PC-3 (cell line): ENCODE measurements at regions of chr4 and their contacts with region 1.

Region 1: DNA sequence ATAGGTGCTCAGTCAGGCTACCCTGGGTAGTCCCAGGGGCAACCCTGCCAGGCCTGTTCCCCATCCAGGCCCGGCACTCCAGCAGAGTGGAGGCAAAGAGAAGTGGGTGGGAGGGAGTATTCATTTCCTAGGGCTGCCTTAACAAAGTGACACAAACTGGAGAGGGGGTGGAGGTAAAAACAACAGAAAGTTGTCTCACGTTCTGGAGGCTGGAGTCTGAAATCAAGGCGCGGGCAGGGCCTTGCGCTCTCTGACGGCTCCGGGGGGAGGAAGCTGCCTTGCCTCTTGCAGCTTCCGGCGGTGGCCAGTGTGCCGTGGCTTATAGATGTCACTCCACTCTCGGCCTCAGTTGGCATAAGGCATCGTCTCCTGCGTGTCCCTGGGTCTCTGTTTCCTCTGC is 90.8 kb downstream of the DCTD start:
- DNase-seq: no peak
- ATAC-seq: no peak
- H3K4me3 ChIP-seq: no peak overlapping the region
- H3K27ac ChIP-seq: no peak overlapping the region
- H3K4me1 ChIP-seq: no peaks in the 10 kb centered on the region; the same call in 1 of the 2 replicates
- H3K27me3 ChIP-seq: no peaks in the 10 kb centered on the region
- CTCF ChIP-seq: no peak

Region 2: GRCh38 chr4:182880387-182881356 is 54.3 kb after region 1 on chr4:
- CTCF ChIA-PET with region 1: no interaction called
- POLR2A ChIA-PET with region 1: no interaction called
- intact Hi-C with region 1: loop called (anchors 5 kb)
- DNase-seq: peak; percentile 36
- ATAC-seq: peak; percentile 85
- H3K4me3 ChIP-seq: no peak overlapping the region
- H3K27ac ChIP-seq: no peak overlapping the region
- H3K4me1 ChIP-seq: no peaks in the 10 kb centered on the region
- H3K27me3 ChIP-seq: no peaks in the 10 kb centered on the region
- CTCF ChIP-seq: no peak

Region 3: GRCh38 chr4:182897601-182898478 is 71.4 kb after region 1 on chr4:
- CTCF ChIA-PET with region 1: no interaction called
- POLR2A ChIA-PET with region 1: no interaction called
- intact Hi-C with region 1: no loop called
- DNase-seq: no peak
- ATAC-seq: no peak
- H3K4me3 ChIP-seq: no peak overlapping the region
- H3K27ac ChIP-seq: no peak overlapping the region
- H3K4me1 ChIP-seq: no peaks in the 10 kb centered on the region
- H3K27me3 ChIP-seq: no peaks in the 10 kb centered on the region
- CTCF ChIP-seq: no peak